ENCODE measurements at regions of chr11 and their contacts with region 1.

Region 1: DNA sequence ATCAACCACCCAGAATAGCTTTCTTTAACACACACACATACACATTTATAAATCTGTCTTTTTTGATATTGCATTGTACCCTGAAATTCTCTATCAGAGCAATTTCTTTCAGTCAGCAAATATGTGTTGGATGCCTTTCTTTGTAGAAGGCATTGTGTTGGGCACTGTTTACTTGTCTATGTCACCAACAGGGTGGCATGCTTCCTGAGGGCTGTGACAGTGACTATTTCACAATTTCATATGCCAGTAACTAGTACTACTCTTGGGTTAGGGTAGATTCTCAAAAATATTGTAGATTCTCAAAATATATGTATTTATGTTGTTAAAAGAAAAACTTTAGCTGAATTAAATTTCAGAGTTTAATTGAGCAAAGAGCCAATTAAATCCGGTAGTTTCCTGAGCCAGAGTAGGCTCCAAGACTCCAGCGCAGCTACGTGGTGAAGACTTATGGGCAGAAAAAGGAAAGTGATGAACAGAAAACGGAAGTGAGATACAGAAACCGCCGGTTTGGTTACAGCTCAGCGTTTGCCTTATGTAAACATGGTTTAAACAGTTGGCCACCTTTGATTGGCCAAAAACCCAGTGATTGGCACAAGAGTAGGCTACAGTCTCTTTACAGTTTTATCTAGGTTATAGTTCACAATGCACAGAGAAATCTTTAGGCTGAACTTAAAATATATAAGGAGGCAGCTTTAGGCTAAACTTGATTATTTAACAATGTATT is 723.3 kb downstream of the NTM start:
- DNase-seq: no peak
- CTCF ChIP-seq: no peak

Region 2: DNA sequence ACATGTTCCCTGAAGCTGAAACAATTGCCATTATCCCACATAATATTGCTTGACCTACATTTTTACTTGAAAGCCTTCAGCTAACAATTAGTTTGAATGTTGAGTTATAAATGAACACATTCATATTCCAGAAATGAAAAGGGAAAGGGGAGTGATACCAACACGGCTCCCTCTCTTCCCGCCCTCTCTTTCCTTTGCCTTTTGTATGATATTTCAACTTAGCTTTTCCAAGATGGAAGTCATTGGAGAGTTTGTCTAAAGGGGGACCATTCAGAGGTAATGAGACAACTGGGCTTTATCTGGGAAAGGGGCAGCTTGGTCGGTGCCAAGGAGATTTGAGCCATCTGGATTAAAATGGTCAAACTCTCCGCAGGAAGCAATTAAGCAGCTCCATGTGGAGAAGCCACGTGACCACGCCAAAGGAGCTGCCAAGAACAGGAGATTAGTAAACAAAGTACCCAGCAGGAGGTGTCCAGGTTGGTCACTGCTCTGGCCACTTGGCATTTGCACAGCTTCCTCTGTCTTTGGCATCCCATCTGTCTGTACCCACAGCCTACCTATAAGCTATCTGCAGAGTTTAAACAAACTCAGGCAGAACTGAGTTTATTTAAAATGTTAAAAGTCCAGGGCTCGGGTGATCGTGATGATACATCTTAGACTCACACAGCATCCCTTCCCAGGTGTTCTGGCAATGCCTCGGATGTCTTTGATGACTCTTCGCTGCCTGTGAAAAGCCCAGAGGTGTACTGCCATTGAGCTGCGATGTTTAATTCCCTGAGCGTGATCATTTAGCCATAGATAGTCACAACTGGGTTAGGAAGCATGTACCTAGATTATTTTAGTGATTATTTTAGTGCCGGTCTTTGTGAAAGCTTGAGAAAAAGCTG is 12.6 kb after region 1 on chr11:
- CTCF ChIA-PET with region 1: interaction called, 18 read pairs
- POLR2A ChIA-PET with region 1: no interaction called
- DNase-seq: no peak
- CTCF ChIP-seq: no peak

Measured in GM10248 (cell line).